Heart right ventricle (tissue), 16 donors: ENCODE measurements at regions of chr20 and their contacts with region 1.

Region 1: GRCh38 chr20:20875716-20876115 is 163.3 kb upstream of the RALGAPA2 start:
- DNase-seq: no peak
- ATAC-seq: no peak
- H3K4me3 ChIP-seq: no peak overlapping the region
- H3K27ac ChIP-seq: no peak overlapping the region
- H3K4me1 ChIP-seq: no peaks in the 10 kb centered on the region
- H3K27me3 ChIP-seq: peaks cover 0 to 68% (median 52%) of the 10 kb centered on the region in 7 donors
- CTCF ChIP-seq: no peak

Region 2: GRCh38 chr20:20759132-20759531 is 116.6 kb before region 1 on chr20:
- intact Hi-C with region 1: no loop called
- DNase-seq: no peak
- ATAC-seq: peak in 6 of 8 donors; percentile 25 to 69 (median 58)
- H3K4me3 ChIP-seq: no peak overlapping the region
- H3K27ac ChIP-seq: peak overlapping the region in 9 of 10 donors; percentile 38 to 82 (median 65)
- H3K4me1 ChIP-seq: peaks cover 0 to 37% (median 0%) of the 10 kb centered on the region in 9 donors
- H3K27me3 ChIP-seq: no peaks in the 10 kb centered on the region
- CTCF ChIP-seq: no peak

Region 3: DNA sequence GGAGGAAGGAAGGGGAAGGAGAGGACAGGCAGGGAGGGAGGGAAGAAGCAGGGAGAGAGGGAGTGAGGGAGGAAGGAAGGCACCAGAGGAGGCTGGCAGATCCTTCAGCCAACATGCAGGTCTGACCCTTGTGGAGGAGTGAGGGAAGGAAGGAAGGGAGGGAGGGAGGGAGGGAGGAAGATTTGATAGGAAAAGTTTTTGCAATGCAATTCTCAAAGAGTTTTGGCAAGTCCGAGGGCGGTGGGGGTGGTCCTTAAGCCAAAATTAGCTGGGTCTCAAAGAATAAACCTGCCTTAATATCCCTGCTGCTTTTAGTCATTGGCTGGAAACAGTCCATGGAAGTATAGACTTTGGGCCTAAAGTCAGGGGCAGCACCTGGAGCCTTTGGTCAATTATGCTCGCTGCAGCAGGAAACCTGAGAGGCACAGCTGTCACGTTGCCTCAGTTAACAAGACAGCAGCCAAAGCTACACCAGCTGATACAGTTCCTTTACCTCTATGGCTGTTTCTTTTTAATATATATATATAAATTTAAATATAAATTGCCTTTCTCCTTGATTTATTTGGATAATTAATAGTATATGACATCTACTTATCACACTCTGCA is 47.6 kb before region 1 on chr20:
- intact Hi-C with region 1: no loop called
- DNase-seq: no peak
- ATAC-seq: no peak
- H3K4me3 ChIP-seq: no peak overlapping the region
- H3K27ac ChIP-seq: no peak overlapping the region
- H3K4me1 ChIP-seq: peaks cover 0 to 10% (median 0%) of the 10 kb centered on the region in 9 donors
- H3K27me3 ChIP-seq: peaks cover 0 to 17% (median 11%) of the 10 kb centered on the region in 7 donors
- CTCF ChIP-seq: no peak

Region 4: GRCh38 chr20:20926209-20926905 is 50.6 kb after region 1 on chr20:
- intact Hi-C with region 1: loop called in 1 of 10 experiments (anchors 5 kb)
- DNase-seq: no peak
- ATAC-seq: no peak
- H3K4me3 ChIP-seq: no peak overlapping the region
- H3K27ac ChIP-seq: no peak overlapping the region
- H3K4me1 ChIP-seq: no peaks in the 10 kb centered on the region
- H3K27me3 ChIP-seq: peaks cover 0 to 8% (median 6%) of the 10 kb centered on the region in 7 donors
- CTCF ChIP-seq: no peak

Region 5: DNA sequence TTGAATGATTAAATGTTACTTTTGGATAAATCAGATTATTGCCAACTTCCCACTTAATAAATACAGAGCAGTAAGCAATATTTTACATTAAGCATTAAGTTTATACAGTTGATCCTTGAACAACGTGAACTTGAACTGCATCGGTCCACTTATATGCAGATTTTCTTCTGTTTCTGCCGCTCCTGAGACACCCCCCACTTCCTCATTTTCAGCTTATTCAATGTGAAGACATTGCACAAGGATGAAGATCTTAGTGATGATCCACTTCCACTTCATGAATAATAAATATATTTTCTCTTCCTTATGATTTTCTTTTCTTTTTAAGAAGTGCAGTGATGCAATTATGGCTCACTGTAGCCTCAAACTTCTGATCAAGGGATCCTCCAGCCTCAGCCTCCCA is 63.3 kb after region 1 on chr20:
- intact Hi-C with region 1: no loop called
- DNase-seq: no peak
- ATAC-seq: no peak
- H3K4me3 ChIP-seq: no peak overlapping the region
- H3K27ac ChIP-seq: no peak overlapping the region
- H3K4me1 ChIP-seq: no peaks in the 10 kb centered on the region
- H3K27me3 ChIP-seq: peaks cover 0 to 7% (median 0%) of the 10 kb centered on the region in 7 donors
- CTCF ChIP-seq: no peak

Region 6: GRCh38 chr20:21421601-21422236 is 546.0 kb after region 1 on chr20:
- intact Hi-C with region 1: no loop called
- DNase-seq: no peak
- ATAC-seq: no peak
- H3K4me3 ChIP-seq: no peak overlapping the region
- H3K27ac ChIP-seq: no peak overlapping the region
- H3K4me1 ChIP-seq: no peaks in the 10 kb centered on the region
- H3K27me3 ChIP-seq: peaks cover 0 to 3% (median 0%) of the 10 kb centered on the region in 7 donors
- CTCF ChIP-seq: no peak